Left cardiac atrium (tissue), 4 donors: ENCODE measurements at regions of chr18 and their contacts with region 1.

Region 1: GRCh38 chr18:9614401-9615279 is at the start of gene PPP4R1:
- DNase-seq: peak; percentile 84
- ATAC-seq: peak; percentile 76 to 81
- total RNA-seq, gene PPP4R1: 55.8 to 77.6 TPM

Region 2: DNA sequence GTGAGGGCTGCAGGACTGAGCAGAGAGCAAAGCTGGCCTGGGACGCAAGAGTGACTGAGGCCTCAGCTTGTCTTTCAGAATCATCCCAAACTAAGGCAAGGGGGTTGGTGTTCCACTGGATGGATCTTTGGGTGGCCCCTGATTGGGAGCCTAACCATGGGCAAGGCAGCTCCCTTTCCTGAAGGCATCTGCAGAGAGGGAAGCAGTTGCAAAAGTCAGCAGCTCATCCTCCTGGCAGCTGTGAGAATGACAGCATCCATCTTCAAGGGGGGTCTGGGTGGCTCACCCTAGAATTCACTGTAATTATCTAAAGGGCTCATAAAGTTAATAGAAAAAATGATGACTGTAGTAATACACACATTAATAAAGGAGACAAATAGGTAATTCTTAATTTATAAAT is 46.9 kb after region 1 on chr18:
- intact Hi-C with region 1: loop called in 1 of 2 experiments (anchors 10 kb)
- DNase-seq: no peak
- ATAC-seq: no peak

Region 3: DNA sequence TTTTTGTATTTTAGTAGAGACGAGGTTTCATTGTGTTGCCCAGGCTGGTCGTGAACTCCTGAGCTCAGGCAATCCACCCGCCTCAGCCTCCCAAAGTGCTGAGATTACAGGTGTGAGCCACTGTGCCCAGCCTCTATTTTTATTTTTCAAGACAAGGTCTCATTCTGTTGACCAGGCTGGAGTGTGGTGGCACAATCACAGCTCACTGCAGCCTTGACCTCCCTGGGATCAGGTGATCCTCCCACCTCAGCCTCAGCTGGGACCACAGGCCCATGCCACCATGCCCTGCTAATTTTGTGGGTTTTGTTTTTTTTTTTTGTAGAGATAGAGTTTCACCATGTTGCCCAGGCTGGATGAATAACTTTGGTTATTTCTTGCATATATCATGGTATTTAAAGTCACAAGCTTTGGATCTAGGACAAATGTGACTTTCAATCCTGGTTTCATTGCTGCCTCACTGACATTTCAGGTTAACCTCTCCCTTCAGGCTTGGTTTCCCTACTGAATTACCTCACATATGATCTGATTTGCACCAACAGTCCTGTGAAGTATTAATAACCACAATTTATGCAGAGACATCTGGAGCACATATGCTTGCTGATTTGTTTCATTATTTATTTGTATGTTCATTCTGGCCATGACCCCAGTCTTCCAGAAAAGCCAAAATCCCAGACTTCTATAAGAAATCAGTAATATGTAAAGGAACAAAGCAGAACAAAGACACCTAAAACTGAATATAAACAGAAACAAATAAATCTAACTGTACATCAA is 76.0 kb after region 1 on chr18:
- intact Hi-C with region 1: no loop called
- DNase-seq: no peak
- ATAC-seq: no peak

Region 4: GRCh38 chr18:9913526-9914333 is 299.1 kb after region 1 on chr18 and contains the start of gene VAPA:
- intact Hi-C with region 1: loop called in 1 of 2 experiments (anchors 10 kb)
- DNase-seq: peak; percentile 97
- ATAC-seq: peak; percentile 96 to 97
- total RNA-seq, gene VAPA: 169 to 219 TPM